Prostate gland (tissue), 2 donors: ENCODE measurements at regions of chr1 and their contacts with region 1.

Region 1: GRCh38 chr1:209207701-209208286 is 375.7 kb upstream of the CAMK1G start:
- DNase-seq: peak; percentile 51
- H3K4me3 ChIP-seq: no peak overlapping the region
- H3K27ac ChIP-seq: no peak overlapping the region
- H3K4me1 ChIP-seq: peaks cover 3% of the 10 kb centered on the region
- H3K27me3 ChIP-seq: no peaks in the 10 kb centered on the region
- CTCF ChIP-seq: peak in 3 of 4 experiments; percentile 35 to 72 (median 53)
- POLR2A ChIP-seq: no peak

Region 2: GRCh38 chr1:208652296-208653160 is 555.3 kb before region 1 on chr1:
- intact Hi-C with region 1: loop called (anchors 5 kb)
- DNase-seq: peak; percentile 21
- H3K4me3 ChIP-seq: no peak overlapping the region
- H3K27ac ChIP-seq: no peak overlapping the region
- H3K4me1 ChIP-seq: no peaks in the 10 kb centered on the region
- H3K27me3 ChIP-seq: no peaks in the 10 kb centered on the region
- CTCF ChIP-seq: peak; percentile 20 to 73 (median 66)
- POLR2A ChIP-seq: no peak

Region 3: DNA sequence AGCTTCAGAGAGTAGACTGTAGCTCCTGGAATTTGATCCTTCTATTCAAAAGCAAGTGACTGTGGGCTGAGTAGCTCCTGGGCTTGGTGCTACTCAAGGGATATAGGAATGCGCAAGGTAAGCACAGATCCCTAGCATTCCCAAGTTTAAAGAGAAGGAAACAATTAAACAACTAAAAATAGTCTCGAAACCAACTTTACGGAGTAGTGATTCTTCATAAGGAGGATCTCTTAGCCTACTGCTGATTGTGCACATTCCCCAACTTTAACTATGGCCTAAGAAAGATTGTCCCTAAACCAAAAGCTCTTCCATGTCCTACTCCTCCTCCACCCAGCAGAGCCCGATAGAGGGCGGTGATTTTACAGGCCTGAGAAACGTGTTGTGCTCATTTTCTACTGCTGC is 149.2 kb after region 1 on chr1:
- intact Hi-C with region 1: loop called (anchors 5 kb)
- DNase-seq: no peak
- H3K4me3 ChIP-seq: no peak overlapping the region
- H3K27ac ChIP-seq: no peak overlapping the region
- H3K4me1 ChIP-seq: no peaks in the 10 kb centered on the region
- H3K27me3 ChIP-seq: no peaks in the 10 kb centered on the region
- CTCF ChIP-seq: no peak
- POLR2A ChIP-seq: no peak

Region 4: GRCh38 chr1:209435654-209436566 is 228.1 kb after region 1 on chr1:
- intact Hi-C with region 1: loop called (anchors 5 kb)
- DNase-seq: peak; percentile 77
- H3K4me3 ChIP-seq: no peak overlapping the region
- H3K27ac ChIP-seq: peak overlapping the region; percentile 34 to 41
- H3K4me1 ChIP-seq: no peaks in the 10 kb centered on the region
- H3K27me3 ChIP-seq: no peaks in the 10 kb centered on the region
- CTCF ChIP-seq: peak; percentile 63 to 93 (median 74)
- POLR2A ChIP-seq: no peak